Activated CD8-positive, alpha-beta memory T cell treated with anti-CD3 and anti-CD28 coated beads, Interleukin-2, amount 10 ng/mL, durations not matched to agents 7 days and 5 days (primary cell): ENCODE measurements at regions of chr5 and their contacts with region 1.

Region 1: DNA sequence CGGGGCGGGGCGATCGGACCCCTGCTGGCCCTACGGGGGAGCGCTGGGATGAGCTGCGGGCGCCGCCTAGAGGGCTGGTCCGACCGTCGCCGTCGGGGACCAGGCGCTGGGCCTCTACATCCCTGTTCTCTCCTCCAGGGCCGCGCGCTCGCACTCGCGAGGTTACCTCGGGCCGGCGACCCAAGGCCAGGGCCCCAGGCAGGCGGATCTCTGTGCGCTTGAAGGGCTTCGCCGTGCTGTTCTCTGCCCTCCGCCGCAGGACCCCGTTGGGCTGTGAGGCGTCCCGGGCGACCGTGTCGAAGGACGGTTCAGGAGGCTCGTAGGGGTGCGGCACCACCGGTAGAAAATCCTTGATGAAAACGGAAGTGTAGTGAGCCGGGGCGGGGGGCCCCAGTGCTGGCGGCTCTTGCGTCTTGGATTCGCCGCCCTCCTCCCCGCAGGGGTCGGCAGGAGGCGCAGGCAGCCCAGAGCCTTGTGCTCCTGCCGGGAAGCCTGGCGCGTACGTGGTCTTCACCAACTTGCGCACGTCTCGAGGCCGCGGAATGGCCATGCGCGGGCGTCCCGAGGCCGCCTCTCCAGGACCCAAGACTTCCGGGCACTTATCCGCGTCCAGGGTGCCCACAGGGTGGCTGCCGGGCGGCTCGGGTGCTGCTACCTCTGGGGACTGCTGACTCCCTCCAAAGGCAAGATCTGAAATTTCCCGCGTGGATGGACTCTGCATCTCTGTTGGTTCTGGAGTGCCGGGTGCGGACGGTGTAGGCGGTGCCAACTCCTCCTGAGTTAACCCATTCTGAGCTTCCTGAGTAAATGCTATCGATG is 2.0 kb downstream of the PROB1 start:
- DNase-seq: peak; percentile 95
- ATAC-seq: peak; percentile 74
- H3K4me3 Mint-ChIP-seq: peak overlapping the region; percentile 96
- H3K27ac Mint-ChIP-seq: peak overlapping the region; percentile 92
- H3K4me1 Mint-ChIP-seq: peaks cover 63% of the 10 kb centered on the region
- H3K27me3 Mint-ChIP-seq: no peaks in the 10 kb centered on the region

Region 2: DNA sequence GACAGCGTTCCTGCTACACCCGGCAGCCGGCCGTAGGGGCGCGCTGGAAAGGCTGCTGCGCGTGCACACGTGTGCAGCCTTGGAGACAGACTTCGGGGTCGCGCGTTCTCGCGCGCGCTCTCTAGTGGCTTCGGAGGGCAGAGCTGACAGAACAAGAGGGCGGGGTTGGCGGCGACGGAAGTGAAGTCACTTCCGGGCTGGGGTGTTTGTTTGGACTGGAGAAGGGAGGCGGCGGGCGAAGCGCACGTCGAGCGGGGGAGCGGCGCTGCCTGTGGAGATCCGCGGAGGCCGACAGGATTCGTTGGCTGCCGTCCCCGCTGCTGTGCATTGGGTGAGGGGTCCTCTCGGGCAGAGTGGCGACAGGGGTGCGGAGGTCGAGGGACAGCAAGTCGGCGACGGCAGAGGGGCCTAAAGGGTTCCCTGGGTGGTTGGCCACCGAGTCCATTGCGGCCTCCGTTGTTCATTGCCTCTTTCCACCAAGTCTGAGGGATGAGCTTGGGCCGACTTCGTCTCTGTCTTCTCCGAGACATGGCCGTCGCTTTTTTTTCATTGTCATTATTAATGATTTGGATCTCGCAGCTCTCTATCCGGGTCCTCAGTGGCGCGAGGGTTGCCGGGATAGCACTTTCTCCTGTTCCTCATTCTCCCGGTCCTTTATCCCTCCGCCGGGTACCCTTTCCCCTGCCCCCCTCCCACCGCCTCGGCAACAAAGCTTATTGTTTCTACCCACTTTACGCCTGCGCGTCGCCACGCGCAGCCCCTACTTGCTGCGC is 51.1 kb before region 1 on chr5 and contains the start of gene PAIP2:
- CTCF ChIA-PET with region 1: interaction called, 31 read pairs
- DNase-seq: peak; percentile 98
- ATAC-seq: peak; percentile 92
- H3K4me3 Mint-ChIP-seq: peak within 1 kb of the TSS; percentile 100
- H3K27ac Mint-ChIP-seq: peak within 1 kb of the TSS; percentile 99
- H3K4me1 Mint-ChIP-seq: peaks cover 42% of the 10 kb centered on the region
- H3K27me3 Mint-ChIP-seq: no peaks in the 10 kb centered on the region
- total RNA-seq, gene PAIP2: 83.4 to 112 TPM

Region 3: GRCh38 chr5:139403787-139404483 is 11.0 kb after region 1 on chr5 and contains the start of gene SPATA24:
- CTCF ChIA-PET with region 1: interaction called, 32 read pairs
- DNase-seq: peak; percentile 99
- ATAC-seq: peak; percentile 95
- H3K4me3 Mint-ChIP-seq: peak within 1 kb of the TSS; percentile 92
- H3K27ac Mint-ChIP-seq: peak within 1 kb of the TSS; percentile 99
- H3K4me1 Mint-ChIP-seq: peaks cover 45% of the 10 kb centered on the region
- H3K27me3 Mint-ChIP-seq: no peaks in the 10 kb centered on the region
- total RNA-seq, gene SPATA24: 5.8 to 6.2 TPM